ENCODE measurements at regions of chr6 and their contacts with region 1.

Region 1: GRCh38 chr6:44221291-44221960 is 2.0 kb upstream of the SLC29A1 start:
- DNase-seq: peak; percentile 90
- ATAC-seq: peak; percentile 70
- H3K4me3 Mint-ChIP-seq: peak overlapping the region; percentile 10
- H3K27ac Mint-ChIP-seq: peak overlapping the region; percentile 69
- H3K4me1 Mint-ChIP-seq: peaks cover 48% of the 10 kb centered on the region
- H3K27me3 Mint-ChIP-seq: peaks cover 3% of the 10 kb centered on the region

Region 2: DNA sequence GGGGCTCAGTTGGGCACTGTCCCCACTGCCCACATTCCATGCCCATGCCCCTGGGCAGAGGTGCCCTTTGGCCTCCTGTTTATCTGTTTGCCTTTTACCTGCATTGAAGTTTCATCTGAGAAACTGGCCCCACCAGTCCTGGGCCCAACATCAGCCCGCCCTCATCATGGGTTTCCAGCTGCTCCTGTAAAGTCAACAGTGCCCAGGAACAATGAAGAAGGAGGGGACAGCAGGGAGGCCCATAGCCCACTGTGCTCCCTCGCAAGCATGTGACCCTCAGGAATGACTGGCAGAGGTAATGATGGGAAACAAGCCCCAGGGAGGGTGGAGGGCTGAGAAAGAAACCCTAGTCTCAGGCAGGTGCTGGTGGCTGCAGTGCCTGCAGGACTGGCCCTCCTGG is 347.2 kb before region 1 on chr6:
- CTCF ChIA-PET with region 1: no interaction called
- POLR2A ChIA-PET with region 1: no interaction called
- intact Hi-C with region 1: no loop called
- DNase-seq: no peak
- ATAC-seq: no peak
- H3K4me3 Mint-ChIP-seq: no peak overlapping the region
- H3K27ac Mint-ChIP-seq: no peak overlapping the region
- H3K4me1 Mint-ChIP-seq: no peaks in the 10 kb centered on the region
- H3K27me3 Mint-ChIP-seq: no peaks in the 10 kb centered on the region

Region 3: DNA sequence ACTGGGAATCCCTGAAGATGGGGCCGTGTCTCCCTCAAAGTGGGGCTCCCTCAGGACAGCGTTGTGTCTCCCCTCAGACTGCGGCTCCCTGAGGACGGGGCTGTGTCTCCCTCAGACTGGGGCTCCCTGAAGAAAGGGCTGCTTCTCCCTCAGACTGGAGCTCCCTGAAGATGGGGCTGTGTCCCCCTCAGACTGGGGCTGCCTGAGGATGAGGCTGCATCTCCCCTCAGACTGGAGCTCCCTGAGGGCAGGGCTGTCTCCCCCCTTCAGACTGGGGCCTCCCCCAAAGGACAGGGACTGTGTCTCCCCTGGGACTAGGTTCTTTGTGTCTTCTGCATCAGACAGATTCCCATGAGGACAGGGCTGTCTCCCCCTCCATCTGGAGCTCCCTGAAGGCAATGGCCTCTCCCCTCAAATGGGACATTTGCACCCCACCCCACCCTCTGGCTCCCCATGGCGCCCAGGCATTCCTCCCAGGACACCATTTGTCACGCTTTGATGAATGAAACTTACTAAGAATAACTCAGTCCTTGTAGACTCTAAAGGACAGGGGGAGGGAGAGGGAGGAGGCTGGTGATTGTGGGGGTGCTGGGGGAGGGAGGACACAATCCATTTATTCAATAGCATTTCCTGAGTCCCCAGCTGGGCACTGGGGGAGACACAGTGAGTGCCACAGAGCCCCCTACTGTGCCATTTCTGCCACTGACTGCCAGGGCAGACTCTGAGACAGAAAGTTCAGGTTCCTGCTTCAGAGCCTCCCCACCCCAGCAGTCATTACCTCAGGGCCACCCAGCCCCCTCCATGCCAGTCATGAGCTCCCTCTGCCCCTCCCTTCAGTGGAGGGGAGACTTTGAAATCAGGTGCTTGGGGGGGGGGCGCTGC is 216.6 kb before region 1 on chr6:
- CTCF ChIA-PET with region 1: no interaction called
- POLR2A ChIA-PET with region 1: no interaction called
- intact Hi-C with region 1: no loop called
- DNase-seq: peak; percentile 29
- ATAC-seq: no peak
- H3K4me3 Mint-ChIP-seq: no peak overlapping the region
- H3K27ac Mint-ChIP-seq: no peak overlapping the region
- H3K4me1 Mint-ChIP-seq: peaks cover 11% of the 10 kb centered on the region
- H3K27me3 Mint-ChIP-seq: peaks cover 18% of the 10 kb centered on the region

Region 4: DNA sequence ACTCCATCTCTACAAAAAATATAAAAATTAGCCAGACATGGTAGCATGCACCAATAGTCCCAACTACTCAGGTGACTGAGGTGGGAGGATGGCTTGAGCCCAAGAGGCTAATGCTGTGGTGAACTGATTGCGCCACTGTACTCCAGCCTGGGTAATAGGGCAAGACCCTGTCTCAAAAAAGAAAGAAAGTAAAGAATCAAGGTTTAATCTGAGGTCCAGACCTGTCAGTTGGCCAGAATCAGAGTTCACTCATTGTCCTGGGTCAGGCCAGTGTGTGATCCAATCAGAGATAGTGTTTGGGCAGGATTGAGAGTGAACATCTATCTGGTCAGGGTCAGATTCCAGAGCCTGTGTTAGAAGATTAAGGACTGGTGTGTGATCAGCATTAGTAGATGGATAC is 78.6 kb before region 1 on chr6:
- CTCF ChIA-PET with region 1: no interaction called
- POLR2A ChIA-PET with region 1: no interaction called
- intact Hi-C with region 1: no loop called
- DNase-seq: no peak
- ATAC-seq: no peak
- H3K4me3 Mint-ChIP-seq: no peak overlapping the region
- H3K27ac Mint-ChIP-seq: no peak overlapping the region
- H3K4me1 Mint-ChIP-seq: no peaks in the 10 kb centered on the region
- H3K27me3 Mint-ChIP-seq: no peaks in the 10 kb centered on the region

Region 5: DNA sequence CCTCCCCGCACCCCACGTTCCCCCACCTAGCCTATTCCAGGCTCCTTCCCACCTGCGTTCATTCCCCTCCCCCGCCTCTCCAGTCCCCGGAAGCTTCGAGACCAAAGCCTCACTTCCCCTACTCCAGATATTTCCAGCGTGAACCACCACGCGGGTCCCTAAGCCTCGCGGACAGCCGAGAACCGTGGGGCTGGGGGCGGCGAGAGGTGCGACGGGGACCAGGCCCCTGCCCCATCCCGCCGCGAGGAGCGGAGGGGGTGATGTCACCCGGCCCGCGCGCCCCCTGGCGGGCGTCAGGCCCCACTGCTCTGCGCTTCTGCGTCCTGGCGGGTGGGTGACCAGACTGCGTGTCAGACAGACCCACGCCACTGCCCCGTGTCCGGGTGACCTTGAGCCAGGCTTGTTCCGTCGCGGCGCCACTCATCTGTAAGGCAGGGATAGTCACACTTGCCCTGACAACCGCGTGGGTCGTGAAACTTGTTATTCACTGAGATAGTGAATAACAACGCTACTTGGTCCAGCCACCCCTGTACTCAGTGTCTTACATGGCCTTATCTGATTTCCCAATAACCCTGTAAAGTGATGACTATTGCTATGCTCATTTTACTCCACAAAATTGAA is 16.5 kb after region 1 on chr6:
- CTCF ChIA-PET with region 1: interaction called, 15 read pairs
- POLR2A ChIA-PET with region 1: interaction called, 8 read pairs
- intact Hi-C with region 1: loop called (anchors 1 kb)
- DNase-seq: peak; percentile 88
- ATAC-seq: peak; percentile 78
- H3K4me3 Mint-ChIP-seq: peak overlapping the region; percentile 75
- H3K27ac Mint-ChIP-seq: peak overlapping the region; percentile 94
- H3K4me1 Mint-ChIP-seq: peaks cover 31% of the 10 kb centered on the region
- H3K27me3 Mint-ChIP-seq: no peaks in the 10 kb centered on the region

Region 6: GRCh38 chr6:44257025-44257752 is 35.8 kb after region 1 on chr6 and contains the start of gene SLC35B2:
- CTCF ChIA-PET with region 1: interaction called, 8 read pairs
- POLR2A ChIA-PET with region 1: interaction called, 28 read pairs
- intact Hi-C with region 1: loop called in 1 of 2 experiments (anchors 2 kb)
- DNase-seq: peak; percentile 81
- ATAC-seq: peak; percentile 72
- H3K4me3 Mint-ChIP-seq: peak within 1 kb of the TSS; percentile 83
- H3K27ac Mint-ChIP-seq: peak within 1 kb of the TSS; percentile 90
- H3K4me1 Mint-ChIP-seq: peaks cover 56% of the 10 kb centered on the region
- H3K27me3 Mint-ChIP-seq: no peaks in the 10 kb centered on the region
- total RNA-seq, gene SLC35B2: 14.1 TPM

Region 7: GRCh38 chr6:44645276-44645675 is 423.9 kb after region 1 on chr6:
- CTCF ChIA-PET with region 1: no interaction called
- POLR2A ChIA-PET with region 1: no interaction called
- intact Hi-C with region 1: no loop called
- DNase-seq: no peak
- ATAC-seq: no peak
- H3K4me3 Mint-ChIP-seq: no peak overlapping the region
- H3K27ac Mint-ChIP-seq: no peak overlapping the region
- H3K4me1 Mint-ChIP-seq: peaks cover 39% of the 10 kb centered on the region
- H3K27me3 Mint-ChIP-seq: peaks cover 2% of the 10 kb centered on the region